Common myeloid progenitor, CD34-positive (primary cell): ENCODE measurements at regions of chrX and their contacts with region 1.

Region 1: GRCh38 chrX:46758906-46759644 is at the start of gene SLC9A7:
- DNase-seq: peak; percentile 70 to 87 (median 85)
- H3K4me3 ChIP-seq: peak within 1 kb of the TSS; percentile 68 to 92 (median 76)
- H3K27ac ChIP-seq: peak within 1 kb of the TSS; percentile 40 to 80
- H3K4me1 ChIP-seq: peaks cover 9 to 39% (median 14%) of the 10 kb centered on the region in 4 experiments
- H3K27me3 ChIP-seq: peaks cover 0 to 14% (median 0%) of the 10 kb centered on the region in 5 experiments

Region 2: GRCh38 chrX:46620505-46620904 is 138.6 kb before region 1 on chrX:
- CTCF ChIA-PET with region 1: no interaction called
- POLR2A ChIA-PET with region 1: no interaction called
- DNase-seq: no peak
- H3K4me3 ChIP-seq: no peak overlapping the region
- H3K27ac ChIP-seq: no peak overlapping the region
- H3K4me1 ChIP-seq: no peaks in the 10 kb centered on the region
- H3K27me3 ChIP-seq: no peaks in the 10 kb centered on the region

Region 3: DNA sequence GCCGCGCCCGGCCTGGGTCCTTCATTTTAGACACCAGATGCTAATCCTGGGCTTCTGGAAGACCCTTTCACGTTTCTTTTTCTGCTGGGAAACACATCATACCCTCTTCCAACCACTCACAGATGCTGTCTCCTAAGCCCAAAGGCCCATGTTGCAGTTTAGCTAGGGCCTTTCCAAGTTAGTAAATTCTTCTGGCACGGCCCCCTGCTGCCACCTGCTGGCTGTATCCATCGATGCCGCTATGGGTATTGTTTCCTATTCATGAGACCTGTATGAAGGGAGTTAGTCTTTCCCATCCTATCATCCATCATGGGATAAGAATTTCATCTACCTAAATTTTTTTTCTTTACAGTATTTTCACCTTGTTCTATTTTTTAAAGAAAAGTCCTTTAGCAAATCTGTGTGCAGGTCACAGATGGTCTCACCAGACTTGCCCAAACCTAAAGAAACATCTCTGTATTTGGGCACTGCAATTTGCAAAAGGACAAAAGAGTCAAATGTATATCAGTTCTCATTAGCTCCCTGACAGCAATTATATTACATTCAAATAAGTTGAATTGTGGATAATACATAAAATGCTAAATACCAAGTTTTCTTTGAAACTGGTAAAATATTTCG is 37.6 kb after region 1 on chrX:
- CTCF ChIA-PET with region 1: interaction called, 39 read pairs
- POLR2A ChIA-PET with region 1: no interaction called
- DNase-seq: peak; percentile 63 to 82 (median 78)
- H3K4me3 ChIP-seq: no peak overlapping the region
- H3K27ac ChIP-seq: no peak overlapping the region
- H3K4me1 ChIP-seq: peaks cover 5 to 19% (median 16%) of the 10 kb centered on the region in 4 experiments
- H3K27me3 ChIP-seq: no peaks in the 10 kb centered on the region

Region 4: GRCh38 chrX:47047989-47048388 is 288.9 kb after region 1 on chrX:
- CTCF ChIA-PET with region 1: no interaction called
- POLR2A ChIA-PET with region 1: no interaction called
- DNase-seq: no peak
- H3K4me3 ChIP-seq: no peak overlapping the region
- H3K27ac ChIP-seq: no peak overlapping the region
- H3K4me1 ChIP-seq: no peaks in the 10 kb centered on the region
- H3K27me3 ChIP-seq: no peaks in the 10 kb centered on the region

Region 5: GRCh38 chrX:47169726-47170515 is 410.8 kb after region 1 on chrX:
- CTCF ChIA-PET with region 1: no interaction called
- POLR2A ChIA-PET with region 1: no interaction called
- DNase-seq: no peak
- H3K4me3 ChIP-seq: no peak overlapping the region
- H3K27ac ChIP-seq: no peak overlapping the region
- H3K4me1 ChIP-seq: no peaks in the 10 kb centered on the region
- H3K27me3 ChIP-seq: peaks cover 0 to 54% (median 0%) of the 10 kb centered on the region in 5 experiments